HCT116 (cell line): ENCODE measurements at regions of chr7 and their contacts with region 1.

Region 1: GRCh38 chr7:15515252-15515651 is 46.6 kb downstream of the AGMO start:
- DNase-seq: no peak
- ATAC-seq: no peak
- H3K4me3 ChIP-seq: no peak overlapping the region
- H3K27ac ChIP-seq: no peak overlapping the region
- H3K4me1 ChIP-seq: no peaks in the 10 kb centered on the region
- H3K27me3 ChIP-seq: no peaks in the 10 kb centered on the region
- CTCF ChIP-seq: no peak
- POLR2A ChIP-seq: no peak
- RAD21 ChIP-seq: no peak

Region 2: DNA sequence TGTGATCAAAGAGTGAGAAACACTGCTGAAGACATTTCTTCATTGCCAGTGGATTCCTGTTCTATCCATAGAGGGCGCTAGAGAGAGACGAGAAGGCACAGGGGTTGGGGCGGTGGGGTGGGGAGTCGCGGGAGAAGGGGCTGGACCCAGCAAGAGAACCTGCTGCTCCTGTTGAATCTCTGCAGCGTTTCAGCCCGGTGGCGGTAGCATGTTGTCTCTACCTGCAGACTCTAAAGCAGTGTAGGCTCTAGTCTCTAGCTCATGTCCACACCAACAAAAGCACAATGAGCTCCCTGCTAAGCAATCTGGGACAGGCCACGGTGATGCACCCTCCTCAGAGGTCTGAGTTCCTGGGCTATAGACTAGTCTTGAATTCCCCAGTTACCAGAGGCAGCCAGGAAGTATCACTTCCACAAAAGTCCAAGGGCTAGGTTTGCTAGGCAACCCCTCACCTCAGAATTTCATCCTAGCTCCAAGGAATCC is 780.4 kb before region 1 on chr7:
- CTCF ChIA-PET with region 1: no interaction called
- POLR2A ChIA-PET with region 1: no interaction called
- RAD21 ChIA-PET with region 1: no interaction called
- intact Hi-C with region 1: no loop called
- DNase-seq: no peak
- ATAC-seq: peak; percentile 46; the same call in 1 of the 2 replicates
- H3K4me3 ChIP-seq: no peak overlapping the region
- H3K27ac ChIP-seq: no peak overlapping the region
- H3K4me1 ChIP-seq: no peaks in the 10 kb centered on the region
- H3K27me3 ChIP-seq: no peaks in the 10 kb centered on the region
- CTCF ChIP-seq: peak in 2 of 3 experiments; percentile 24 to 48; a peak in 3 of 6 replicates
- POLR2A ChIP-seq: no peak
- RAD21 ChIP-seq: no peak

Region 3: GRCh38 chr7:15407910-15408309 is 107.3 kb before region 1 on chr7:
- CTCF ChIA-PET with region 1: no interaction called
- POLR2A ChIA-PET with region 1: no interaction called
- RAD21 ChIA-PET with region 1: no interaction called
- intact Hi-C with region 1: no loop called
- DNase-seq: no peak
- ATAC-seq: no peak
- H3K4me3 ChIP-seq: no peak overlapping the region
- H3K27ac ChIP-seq: no peak overlapping the region
- H3K4me1 ChIP-seq: no peaks in the 10 kb centered on the region
- H3K27me3 ChIP-seq: no peaks in the 10 kb centered on the region
- CTCF ChIP-seq: no peak
- POLR2A ChIP-seq: no peak
- RAD21 ChIP-seq: no peak

Region 4: GRCh38 chr7:15558747-15559146 is 43.5 kb after region 1 on chr7:
- CTCF ChIA-PET with region 1: no interaction called
- POLR2A ChIA-PET with region 1: no interaction called
- RAD21 ChIA-PET with region 1: no interaction called
- intact Hi-C with region 1: loop called (anchors 2 kb)
- DNase-seq: no peak
- ATAC-seq: no peak
- H3K4me3 ChIP-seq: no peak overlapping the region
- H3K27ac ChIP-seq: no peak overlapping the region
- H3K4me1 ChIP-seq: no peaks in the 10 kb centered on the region
- H3K27me3 ChIP-seq: no peaks in the 10 kb centered on the region
- CTCF ChIP-seq: no peak
- POLR2A ChIP-seq: no peak
- RAD21 ChIP-seq: no peak